ENCODE measurements at regions of chr20 and their contacts with region 1.

Region 1: GRCh38 chr20:49790077-49790798 is 22.4 kb upstream of the SLC9A8 start:
- DNase-seq: no peak
- H3K4me3 Mint-ChIP-seq: peak overlapping the region; percentile 0
- H3K27ac Mint-ChIP-seq: peak overlapping the region; percentile 65
- H3K4me1 Mint-ChIP-seq: peaks cover 73% of the 10 kb centered on the region
- H3K27me3 Mint-ChIP-seq: no peaks in the 10 kb centered on the region
- CTCF ChIP-seq: no peak

Region 2: GRCh38 chr20:49713753-49714712 is 76.2 kb before region 1 on chr20 and contains the start of gene B4GALT5:
- CTCF ChIA-PET with region 1: interaction called, 3 read pairs
- intact Hi-C with region 1: loop called (anchors 5 kb)
- DNase-seq: peak; percentile 87
- H3K4me3 Mint-ChIP-seq: peak within 1 kb of the TSS; percentile 92
- H3K27ac Mint-ChIP-seq: peak within 1 kb of the TSS; percentile 89
- H3K4me1 Mint-ChIP-seq: peaks cover 47% of the 10 kb centered on the region
- H3K27me3 Mint-ChIP-seq: no peaks in the 10 kb centered on the region
- CTCF ChIP-seq: no peak
- total RNA-seq, gene B4GALT5: 117 and 131 TPM in 2 replicates

Region 3: GRCh38 chr20:49775229-49775693 is 15.0 kb before region 1 on chr20:
- CTCF ChIA-PET with region 1: interaction called, 11 read pairs
- intact Hi-C with region 1: no loop called
- DNase-seq: peak; percentile 89
- H3K4me3 Mint-ChIP-seq: peak overlapping the region; percentile 43
- H3K27ac Mint-ChIP-seq: peak overlapping the region; percentile 85
- H3K4me1 Mint-ChIP-seq: peaks cover 73% of the 10 kb centered on the region
- H3K27me3 Mint-ChIP-seq: no peaks in the 10 kb centered on the region
- CTCF ChIP-seq: no peak

Region 4: DNA sequence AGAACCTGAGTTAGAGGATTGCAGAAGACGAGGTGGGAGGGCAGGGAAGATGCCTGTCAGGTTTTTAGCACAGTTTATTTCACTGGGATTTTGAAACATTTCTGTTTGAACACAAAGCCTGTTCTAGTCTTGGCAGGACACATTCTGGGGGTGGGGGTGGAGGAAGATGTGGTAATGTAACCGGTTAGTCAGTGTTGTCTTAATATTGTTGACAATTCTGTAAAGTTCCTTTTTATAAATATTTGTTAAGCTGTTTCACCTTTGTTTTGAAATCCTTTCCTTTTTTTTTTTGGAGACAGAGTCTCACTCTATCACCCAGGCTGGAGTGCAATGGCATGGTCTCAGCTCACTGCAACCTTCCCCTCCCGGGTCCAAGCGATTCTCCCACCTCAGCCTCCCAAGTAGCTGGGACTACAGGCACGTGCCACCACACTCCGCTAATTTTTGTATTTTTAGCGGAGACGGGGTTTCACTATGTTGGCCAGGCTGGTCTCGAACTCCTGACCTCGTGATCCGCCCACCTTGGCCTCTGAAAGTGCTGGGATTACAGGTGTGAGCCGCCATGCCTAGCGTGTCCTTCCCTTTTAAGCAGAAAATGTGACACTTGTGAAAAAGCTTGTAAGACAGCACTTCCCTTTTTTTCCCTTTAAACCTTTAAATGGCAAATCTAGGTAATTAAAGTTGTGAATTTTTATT is 42.5 kb after region 1 on chr20:
- CTCF ChIA-PET with region 1: no interaction called
- intact Hi-C with region 1: no loop called
- DNase-seq: no peak
- H3K4me3 Mint-ChIP-seq: no peak overlapping the region
- H3K27ac Mint-ChIP-seq: no peak overlapping the region
- H3K4me1 Mint-ChIP-seq: no peaks in the 10 kb centered on the region
- H3K27me3 Mint-ChIP-seq: no peaks in the 10 kb centered on the region
- CTCF ChIP-seq: no peak